ENCODE measurements at regions of chr2 and their contacts with region 1.

Region 1: DNA sequence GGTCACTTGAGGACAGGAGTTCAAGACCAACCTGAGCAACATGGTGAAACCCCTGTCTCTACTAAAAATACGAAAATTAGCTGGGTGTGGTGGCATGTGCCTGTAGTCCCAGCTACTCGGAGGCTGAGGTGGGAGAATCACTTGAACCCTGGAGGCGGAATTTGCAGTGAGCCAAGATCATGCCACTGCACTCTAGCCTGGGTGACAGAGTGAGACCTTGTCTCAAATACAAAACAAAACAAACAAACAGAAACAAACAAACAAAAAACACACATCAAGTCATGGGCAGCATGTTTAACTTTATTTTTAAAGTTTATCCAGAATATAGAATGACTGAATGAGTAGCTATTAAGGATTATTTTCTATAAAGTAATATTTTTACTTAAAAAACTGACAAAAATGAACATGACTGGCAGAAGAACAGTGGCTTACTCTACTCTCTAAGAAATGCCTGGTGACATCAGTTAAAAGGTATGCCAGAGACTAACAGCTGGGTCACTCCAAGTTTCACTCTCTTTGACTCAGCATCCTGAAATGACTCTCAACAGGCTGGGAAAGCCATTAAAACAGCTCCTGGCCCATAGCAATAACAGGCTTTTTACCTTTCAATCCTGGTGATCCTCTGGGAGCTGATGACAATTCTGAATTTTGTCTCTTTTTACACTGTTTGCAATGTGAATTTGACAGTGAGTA is 281.6 kb upstream of the STON1 start:
- DNase-seq: no peak
- ATAC-seq: peak; percentile 92 to 95

Region 2: GRCh38 chr2:48306409-48307284 is 58.3 kb after region 1 on chr2:
- intact Hi-C with region 1: loop called in 1 of 2 experiments (anchors 10 kb)
- DNase-seq: no peak
- ATAC-seq: peak; percentile 86 to 89

Region 3: GRCh38 chr2:48420512-48421197 is 172.3 kb after region 1 on chr2:
- intact Hi-C with region 1: loop called in 1 of 2 experiments (anchors 5 kb)
- DNase-seq: peak; percentile 89
- ATAC-seq: peak; percentile 87 to 91